HepG2 (cell line): ENCODE measurements at regions of chr6 and their contacts with region 1.

Region 1: GRCh38 chr6:107539409-107539808 is 49.5 kb downstream of the SOBP start:
- DNase-seq: peak; percentile 96
- ATAC-seq: peak; percentile 82
- H3K4me3 ChIP-seq: peak overlapping the region; percentile 34 to 49 (median 40); a peak in 5 of 6 replicates
- H3K27ac ChIP-seq: peak overlapping the region; percentile 95
- H3K4me1 ChIP-seq: peaks cover 38% of the 10 kb centered on the region
- H3K27me3 ChIP-seq: no peaks in the 10 kb centered on the region
- CTCF ChIP-seq: no peak
- EP300 ChIP-seq: peak; percentile 90 to 94; a peak in 3 of 4 replicates
- POLR2A ChIP-seq: peak in 1 of 2 experiments; percentile 77; a peak in 2 of 4 replicates
- RAD21 ChIP-seq: no peak

Region 2: DNA sequence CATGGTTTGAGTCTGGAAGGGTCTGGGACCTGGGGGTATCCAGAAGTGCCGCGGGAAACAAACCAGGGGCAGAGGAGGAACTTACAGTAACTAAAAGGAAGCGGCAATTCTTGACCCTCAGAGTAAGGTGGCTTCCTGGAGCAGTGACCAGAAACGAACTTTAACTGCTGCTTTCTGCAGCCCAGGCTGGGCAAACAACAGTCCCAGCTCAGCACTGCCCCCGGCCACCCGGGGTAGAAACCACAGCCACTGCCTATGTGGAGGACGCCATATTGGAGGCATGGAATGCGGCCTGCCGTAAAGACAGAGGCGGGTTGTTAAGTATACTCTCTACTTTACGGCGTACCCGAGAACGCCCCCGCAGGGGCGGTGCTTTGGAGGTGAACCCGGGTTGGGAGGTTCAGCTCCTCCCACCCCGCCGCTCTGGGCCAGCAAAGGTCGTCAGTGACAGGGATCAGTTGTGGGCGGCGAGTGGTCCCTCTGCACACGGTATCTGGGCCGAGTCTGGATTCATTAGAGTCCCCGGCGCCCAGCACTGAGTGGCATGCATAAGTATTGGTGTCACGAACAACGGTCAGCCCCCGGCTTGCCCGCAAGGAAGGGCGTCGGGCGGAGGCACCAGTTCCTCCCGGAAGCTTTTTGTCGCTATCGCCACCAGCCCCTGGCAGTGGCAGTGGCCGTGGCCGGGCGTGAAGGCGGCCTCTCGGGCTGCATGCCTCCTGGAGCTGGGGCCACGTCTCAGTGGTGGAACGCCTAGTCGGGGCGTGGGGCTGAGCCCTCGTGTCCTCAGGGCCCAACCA is 79.9 kb before region 1 on chr6 and contains the start of gene PDSS2:
- CTCF ChIA-PET with region 1: no interaction called
- POLR2A ChIA-PET with region 1: interaction called, 40 read pairs
- in situ Hi-C with region 1: no loop called
- intact Hi-C with region 1: no loop called
- DNase-seq: peak; percentile 97
- ATAC-seq: peak; percentile 95
- H3K4me3 ChIP-seq: peak within 1 kb of the TSS; percentile 90 to 98 (median 92)
- H3K27ac ChIP-seq: peak within 1 kb of the TSS; percentile 93
- H3K4me1 ChIP-seq: peaks cover 57% of the 10 kb centered on the region
- H3K27me3 ChIP-seq: no peaks in the 10 kb centered on the region; a peak in 1 of 5 replicates
- CTCF ChIP-seq: peak; percentile 85
- EP300 ChIP-seq: peak in 1 of 2 experiments; percentile 51; a peak in 1 of 4 replicates
- POLR2A ChIP-seq: peak; percentile 93 to 99
- RAD21 ChIP-seq: peak; percentile 29; the same call in 1 of the 2 replicates
- total RNA-seq, gene PDSS2: 17.0 and 23.7 TPM in 2 replicates

Region 3: DNA sequence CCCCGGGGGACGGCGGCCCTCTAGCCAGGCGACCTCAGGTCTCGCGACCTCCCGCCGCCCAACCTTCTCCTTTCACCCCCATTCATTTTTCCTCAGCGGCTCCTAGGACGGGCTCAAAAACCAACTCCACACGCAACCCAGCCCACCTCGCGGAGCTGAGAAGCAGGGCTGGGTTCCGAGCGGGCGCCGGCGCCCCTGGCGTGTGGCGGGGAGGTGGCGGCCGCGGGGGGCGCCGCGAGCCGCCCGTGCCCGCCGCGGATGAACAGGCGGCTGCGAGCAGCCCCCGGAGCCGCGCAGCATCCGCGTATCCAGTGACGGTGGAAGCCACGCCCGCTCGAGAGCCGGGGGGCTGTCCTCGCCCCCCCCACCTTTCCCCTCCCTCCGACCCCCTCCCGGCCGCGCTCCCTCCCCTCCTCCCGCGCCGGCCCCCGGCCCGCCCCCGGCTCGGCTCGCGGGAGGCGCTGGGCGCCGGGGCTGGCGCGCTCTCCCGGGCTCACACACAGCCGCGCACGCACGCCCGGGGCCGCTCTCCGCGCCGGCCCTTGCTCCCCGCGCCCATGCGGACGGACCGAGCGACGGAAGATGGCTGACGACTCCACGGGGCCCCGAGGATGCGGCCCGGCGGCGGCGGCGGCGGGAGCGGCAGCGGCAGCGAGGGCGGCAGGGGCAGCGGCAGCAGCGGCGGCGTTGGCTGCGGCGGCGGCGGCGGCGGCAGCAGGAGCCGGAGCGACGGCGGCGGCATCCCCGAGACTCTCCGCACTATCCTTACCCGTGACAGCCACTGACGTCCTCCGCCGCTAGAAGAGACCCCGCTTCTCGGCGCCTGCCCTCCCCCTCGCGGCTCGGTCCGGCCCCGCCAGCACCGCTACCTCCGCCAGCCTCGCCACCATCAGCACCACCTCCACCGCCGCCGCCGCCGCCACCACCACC is 49.5 kb before region 1 on chr6 and contains the start of gene SOBP:
- CTCF ChIA-PET with region 1: no interaction called
- POLR2A ChIA-PET with region 1: interaction called, 41 read pairs
- in situ Hi-C with region 1: loop called (anchors 5 kb)
- intact Hi-C with region 1: loop called (anchors 1 kb)
- DNase-seq: peak; percentile 44
- ATAC-seq: peak; percentile 36
- H3K4me3 ChIP-seq: peak within 1 kb of the TSS; percentile 94 to 98 (median 96)
- H3K27ac ChIP-seq: peak within 1 kb of the TSS; percentile 76
- H3K4me1 ChIP-seq: peaks cover 35% of the 10 kb centered on the region
- H3K27me3 ChIP-seq: no peaks in the 10 kb centered on the region; a peak in 2 of 5 replicates
- CTCF ChIP-seq: no peak
- EP300 ChIP-seq: no peak
- POLR2A ChIP-seq: peak in 1 of 2 experiments; percentile 60; a peak in 2 of 4 replicates
- RAD21 ChIP-seq: 0 out of 2 replicates have a peak, but pooled peaks have one; percentile 32
- total RNA-seq, gene SOBP: 5.0 and 6.9 TPM in 2 replicates

Region 4: GRCh38 chr6:107515955-107516354 is 23.5 kb before region 1 on chr6:
- CTCF ChIA-PET with region 1: no interaction called
- POLR2A ChIA-PET with region 1: no interaction called
- in situ Hi-C with region 1: no loop called
- intact Hi-C with region 1: no loop called
- DNase-seq: no peak
- ATAC-seq: no peak
- H3K4me3 ChIP-seq: no peak overlapping the region
- H3K27ac ChIP-seq: no peak overlapping the region
- H3K4me1 ChIP-seq: no peaks in the 10 kb centered on the region
- H3K27me3 ChIP-seq: no peaks in the 10 kb centered on the region
- CTCF ChIP-seq: no peak
- EP300 ChIP-seq: no peak
- POLR2A ChIP-seq: no peak
- RAD21 ChIP-seq: no peak

Region 5: DNA sequence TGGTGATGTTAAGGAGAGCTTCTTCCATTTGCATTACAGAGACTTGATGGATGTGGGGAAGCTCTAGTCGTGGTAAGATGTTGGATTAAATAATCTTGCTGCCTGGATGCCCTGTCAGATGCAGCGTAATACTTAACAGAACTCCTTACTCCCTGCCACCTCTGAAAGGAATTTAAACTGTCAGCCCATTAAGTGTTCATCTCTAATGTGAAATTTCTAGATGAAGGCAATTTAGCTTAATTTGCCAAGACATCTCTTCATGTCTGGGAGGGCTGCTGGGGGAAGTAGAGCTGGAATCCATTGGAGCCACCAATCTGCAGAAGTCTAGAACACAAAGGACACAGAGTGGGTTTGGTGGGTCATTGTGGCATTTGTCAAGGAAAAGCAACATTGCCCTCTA is 14.9 kb after region 1 on chr6:
- CTCF ChIA-PET with region 1: no interaction called
- POLR2A ChIA-PET with region 1: interaction called, 11 read pairs
- in situ Hi-C with region 1: no loop called
- intact Hi-C with region 1: no loop called
- DNase-seq: no peak
- ATAC-seq: no peak
- H3K4me3 ChIP-seq: no peak overlapping the region
- H3K27ac ChIP-seq: no peak overlapping the region
- H3K4me1 ChIP-seq: no peaks in the 10 kb centered on the region
- H3K27me3 ChIP-seq: no peaks in the 10 kb centered on the region; a peak in 1 of 5 replicates
- CTCF ChIP-seq: no peak
- EP300 ChIP-seq: no peak
- POLR2A ChIP-seq: no peak
- RAD21 ChIP-seq: no peak